HCT116 (cell line): ENCODE measurements at regions of chr20 and their contacts with region 1.

Region 1: GRCh38 chr20:45362804-45363610 is at the start of gene SYS1:
- DNase-seq: peak; percentile 96
- ATAC-seq: peak; percentile 85
- H3K4me3 ChIP-seq: peak within 1 kb of the TSS; percentile 72 to 98
- H3K27ac ChIP-seq: peak within 1 kb of the TSS; percentile 80
- H3K4me1 ChIP-seq: peaks cover 40 to 50% of the 10 kb centered on the region in 2 experiments
- H3K27me3 ChIP-seq: no peaks in the 10 kb centered on the region
- CTCF ChIP-seq: peak; percentile 73 to 83 (median 79)
- POLR2A ChIP-seq: peak; percentile 76
- RAD21 ChIP-seq: peak; percentile 80
- total RNA-seq, gene SYS1: 20.5 TPM

Region 2: GRCh38 chr20:45322952-45323383 is 40.0 kb before region 1 on chr20:
- CTCF ChIA-PET with region 1: interaction called, 10 read pairs
- POLR2A ChIA-PET with region 1: interaction called, 4 read pairs
- RAD21 ChIA-PET with region 1: interaction called, 3 to 4 read pairs
- intact Hi-C with region 1: no loop called
- DNase-seq: peak; percentile 31
- ATAC-seq: peak; percentile 68
- H3K4me3 ChIP-seq: no peak overlapping the region
- H3K27ac ChIP-seq: no peak overlapping the region
- H3K4me1 ChIP-seq: no peaks in the 10 kb centered on the region
- H3K27me3 ChIP-seq: no peaks in the 10 kb centered on the region
- CTCF ChIP-seq: peak; percentile 13 to 79 (median 28); a peak in 3 of 6 replicates
- POLR2A ChIP-seq: no peak
- RAD21 ChIP-seq: peak; percentile 91

Region 3: DNA sequence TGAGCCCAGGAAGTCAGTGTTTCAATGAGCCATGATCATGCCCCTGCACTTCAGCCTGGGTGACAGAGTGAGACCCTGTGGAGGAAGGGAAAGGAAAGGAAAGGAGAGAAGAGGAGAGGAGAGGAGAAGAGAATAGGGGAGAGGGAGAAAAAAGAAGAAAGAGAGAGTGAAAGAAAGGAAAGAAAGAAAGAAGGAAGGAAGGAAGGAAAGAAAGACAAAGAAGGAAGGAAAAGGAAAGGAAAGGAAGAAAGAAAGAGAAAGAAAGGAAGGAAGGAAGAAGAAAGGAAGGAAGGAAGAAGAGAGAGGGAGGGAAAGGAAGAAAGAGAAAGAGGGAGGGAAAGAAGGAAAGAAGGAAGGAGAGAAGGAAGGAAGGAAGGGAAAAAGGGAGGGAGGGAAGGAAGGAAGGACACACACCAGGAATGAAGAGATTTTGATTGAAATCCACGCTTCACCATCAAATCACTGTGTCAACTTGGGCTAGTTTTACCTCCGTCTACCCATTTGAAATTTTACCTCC is 201.8 kb after region 1 on chr20:
- CTCF ChIA-PET with region 1: no interaction called
- POLR2A ChIA-PET with region 1: no interaction called
- RAD21 ChIA-PET with region 1: no interaction called
- intact Hi-C with region 1: no loop called
- DNase-seq: no peak
- ATAC-seq: no peak
- H3K4me3 ChIP-seq: no peak overlapping the region
- H3K27ac ChIP-seq: no peak overlapping the region
- H3K4me1 ChIP-seq: peaks cover 0 to 3% of the 10 kb centered on the region in 2 experiments; a peak in 1 of 4 replicates
- H3K27me3 ChIP-seq: peaks cover 17% of the 10 kb centered on the region; the same call in 1 of the 2 replicates
- CTCF ChIP-seq: no peak
- POLR2A ChIP-seq: no peak
- RAD21 ChIP-seq: no peak